ENCODE measurements at regions of chr6 and their contacts with region 1.

Region 1: GRCh38 chr6:39892490-39893129 is 41.7 kb downstream of the MOCS1 start:
- DNase-seq: peak; percentile 69
- ATAC-seq: peak; percentile 75
- H3K4me3 ChIP-seq: no peak overlapping the region
- H3K27ac ChIP-seq: no peak overlapping the region
- H3K4me1 ChIP-seq: peaks cover 13% of the 10 kb centered on the region
- H3K27me3 ChIP-seq: no peaks in the 10 kb centered on the region
- CTCF ChIP-seq: peak; percentile 91
- POLR2A ChIP-seq: 0 out of 2 replicates have a peak, but pooled peaks have one; percentile 49
- RAD21 ChIP-seq: peak; percentile 97

Region 2: GRCh38 chr6:39361657-39362486 is 530.7 kb before region 1 on chr6:
- CTCF ChIA-PET with region 1: interaction called, 3 read pairs
- POLR2A ChIA-PET with region 1: no interaction called
- dilution Hi-C with region 1: no loop called
- in situ Hi-C with region 1: loop called (anchors 10 kb)
- intact Hi-C with region 1: loop called (anchors 1 kb)
- DNase-seq: peak; percentile 58
- ATAC-seq: peak; percentile 98
- H3K4me3 ChIP-seq: no peak overlapping the region
- H3K27ac ChIP-seq: no peak overlapping the region
- H3K4me1 ChIP-seq: no peaks in the 10 kb centered on the region; the same call in 1 of the 2 replicates
- H3K27me3 ChIP-seq: no peaks in the 10 kb centered on the region
- CTCF ChIP-seq: peak; percentile 75
- POLR2A ChIP-seq: no peak
- RAD21 ChIP-seq: peak; percentile 87

Region 3: DNA sequence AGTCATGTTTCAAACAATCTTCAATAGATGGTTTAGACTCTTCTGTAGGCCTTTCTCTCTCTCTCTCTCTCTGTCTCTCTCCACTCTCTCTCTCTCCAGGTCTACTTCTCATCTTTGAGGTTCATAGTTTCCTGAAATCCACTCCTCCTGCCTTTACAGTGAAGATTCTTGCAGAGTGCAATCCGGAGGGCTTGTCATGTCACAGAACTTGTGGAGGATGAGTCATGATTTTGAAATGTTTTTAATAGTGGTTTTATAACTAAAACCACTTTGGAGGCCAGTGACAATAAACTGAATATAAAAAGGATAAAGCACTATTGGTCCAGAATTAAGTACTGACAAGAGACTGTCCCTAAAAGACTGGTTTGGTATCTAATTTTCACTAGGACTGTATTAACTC is 323.7 kb before region 1 on chr6:
- CTCF ChIA-PET with region 1: no interaction called
- POLR2A ChIA-PET with region 1: no interaction called
- dilution Hi-C with region 1: no loop called
- in situ Hi-C with region 1: no loop called
- intact Hi-C with region 1: loop called (anchors 10 kb)
- DNase-seq: peak; percentile 33
- ATAC-seq: peak; percentile 27; the same call in 1 of the 2 replicates
- H3K4me3 ChIP-seq: no peak overlapping the region
- H3K27ac ChIP-seq: no peak overlapping the region
- H3K4me1 ChIP-seq: no peaks in the 10 kb centered on the region
- H3K27me3 ChIP-seq: no peaks in the 10 kb centered on the region
- CTCF ChIP-seq: no peak
- POLR2A ChIP-seq: no peak
- RAD21 ChIP-seq: no peak

Region 4: DNA sequence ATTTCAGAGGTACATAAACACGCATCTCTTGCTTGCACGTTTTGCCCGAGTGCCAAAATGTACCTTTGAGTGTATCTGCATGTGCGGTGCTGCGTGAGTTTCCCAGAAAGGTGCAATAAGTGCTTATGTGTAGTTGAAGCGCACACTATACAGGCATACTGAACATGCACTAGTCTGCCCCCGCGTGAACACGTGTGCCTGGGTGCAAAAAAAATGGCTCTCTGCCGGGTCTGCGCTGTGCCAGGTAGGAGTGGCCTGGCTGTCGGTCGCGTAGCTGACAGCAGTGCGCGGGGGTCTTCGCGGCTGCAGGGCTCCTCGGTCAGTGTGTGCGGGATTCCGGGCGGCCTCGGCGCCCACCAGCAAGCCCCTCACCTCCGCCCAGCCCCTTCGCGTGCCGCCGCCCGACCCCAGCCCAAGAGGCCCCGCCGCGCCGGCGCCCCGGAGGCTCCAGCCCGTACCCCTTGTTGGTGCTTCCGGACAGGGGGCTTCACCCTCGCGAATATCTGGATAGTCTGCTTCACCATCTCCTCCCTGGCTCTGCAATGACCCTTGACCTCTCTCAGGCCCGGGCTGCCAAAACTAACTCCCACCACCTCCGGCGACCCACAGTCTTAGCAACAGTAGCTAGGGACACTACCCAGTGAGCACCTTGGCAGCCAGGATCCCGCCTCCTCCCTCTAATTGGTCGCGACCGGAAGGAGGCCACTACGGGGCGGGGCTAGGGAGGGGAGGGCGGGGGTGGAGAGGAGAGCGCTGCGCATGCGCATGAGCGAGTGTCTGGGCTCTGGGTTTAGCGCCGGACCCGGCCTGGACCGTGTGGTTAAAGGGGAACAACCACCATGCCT is 167.6 kb before region 1 on chr6 and contains the start of gene KIF6:
- CTCF ChIA-PET with region 1: interaction called, 4 read pairs
- POLR2A ChIA-PET with region 1: no interaction called
- dilution Hi-C with region 1: no loop called
- in situ Hi-C with region 1: no loop called
- intact Hi-C with region 1: loop called (anchors 5 kb)
- DNase-seq: peak; percentile 73
- ATAC-seq: peak; percentile 100
- H3K4me3 ChIP-seq: peak within 1 kb of the TSS; percentile 79
- H3K27ac ChIP-seq: no peak within 1 kb of the TSS
- H3K4me1 ChIP-seq: no peaks in the 10 kb centered on the region; the same call in 1 of the 2 replicates
- H3K27me3 ChIP-seq: no peaks in the 10 kb centered on the region
- CTCF ChIP-seq: no peak
- POLR2A ChIP-seq: no peak
- RAD21 ChIP-seq: no peak
- total RNA-seq, gene KIF6: under 0.01 TPM in 1 of 2 replicates, not detected in the other

Region 5: GRCh38 chr6:39865011-39865888 is 27.4 kb before region 1 on chr6:
- CTCF ChIA-PET with region 1: interaction called, 18 read pairs
- POLR2A ChIA-PET with region 1: no interaction called
- dilution Hi-C with region 1: no loop called
- in situ Hi-C with region 1: no loop called
- intact Hi-C with region 1: loop called (anchors 1 kb)
- DNase-seq: peak; percentile 60
- ATAC-seq: peak; percentile 90
- H3K4me3 ChIP-seq: no peak overlapping the region
- H3K27ac ChIP-seq: no peak overlapping the region
- H3K4me1 ChIP-seq: no peaks in the 10 kb centered on the region
- H3K27me3 ChIP-seq: no peaks in the 10 kb centered on the region
- CTCF ChIP-seq: peak; percentile 74
- POLR2A ChIP-seq: no peak
- RAD21 ChIP-seq: peak; percentile 81

Region 6: GRCh38 chr6:40148882-40149573 is 256.4 kb after region 1 on chr6:
- CTCF ChIA-PET with region 1: no interaction called
- POLR2A ChIA-PET with region 1: no interaction called
- dilution Hi-C with region 1: no loop called
- in situ Hi-C with region 1: no loop called
- intact Hi-C with region 1: no loop called
- DNase-seq: no peak
- ATAC-seq: no peak
- H3K4me3 ChIP-seq: no peak overlapping the region
- H3K27ac ChIP-seq: no peak overlapping the region
- H3K4me1 ChIP-seq: no peaks in the 10 kb centered on the region
- H3K27me3 ChIP-seq: no peaks in the 10 kb centered on the region
- CTCF ChIP-seq: no peak
- POLR2A ChIP-seq: no peak
- RAD21 ChIP-seq: no peak